ENCODE measurements at regions of chr21 and their contacts with region 1.

Region 1: DNA sequence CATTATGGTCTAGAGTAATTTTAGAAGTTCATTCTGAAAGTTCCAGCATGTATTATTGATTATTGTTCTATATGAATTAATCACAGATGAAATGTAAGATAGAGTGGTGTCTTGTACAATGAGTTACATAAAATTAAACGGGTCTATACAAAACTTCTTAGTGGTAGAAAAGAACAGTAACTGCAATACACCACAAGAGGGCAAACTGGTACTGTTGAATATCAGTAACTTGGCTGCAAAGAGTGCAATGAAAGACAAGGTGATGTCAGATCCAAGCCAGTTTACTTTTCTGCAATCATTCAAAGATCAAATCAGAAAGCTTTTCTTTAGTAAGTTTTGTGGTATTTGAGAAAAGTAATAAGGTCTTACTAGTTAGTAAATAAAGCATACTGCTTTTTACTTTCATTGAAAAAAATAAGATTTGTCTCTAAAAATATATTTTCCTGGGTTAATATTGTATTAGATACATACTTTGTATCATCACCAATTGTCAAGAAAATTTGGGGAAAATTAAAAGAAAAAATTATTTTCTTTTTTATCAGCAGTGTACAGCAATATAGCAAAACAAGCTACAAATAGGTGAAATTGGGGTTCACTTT is 66.4 kb upstream of the BTG3 start:
- DNase-seq: no peak
- H3K4me3 ChIP-seq: no peak overlapping the region
- H3K27ac ChIP-seq: no peak overlapping the region
- H3K27me3 ChIP-seq: no peaks in the 10 kb centered on the region
- CTCF ChIP-seq: peak; percentile 73 to 96 (median 90)

Region 2: GRCh38 chr21:16751695-16752474 is 927.2 kb before region 1 on chr21:
- intact Hi-C with region 1: no loop called
- DNase-seq: no peak
- H3K4me3 ChIP-seq: peak overlapping the region in 2 of 59 donors; percentile 6 to 15
- H3K27ac ChIP-seq: peak overlapping the region in 7 of 59 donors; percentile 6 to 59 (median 49)
- H3K27me3 ChIP-seq: no peaks in the 10 kb centered on the region
- CTCF ChIP-seq: no peak

Region 3: DNA sequence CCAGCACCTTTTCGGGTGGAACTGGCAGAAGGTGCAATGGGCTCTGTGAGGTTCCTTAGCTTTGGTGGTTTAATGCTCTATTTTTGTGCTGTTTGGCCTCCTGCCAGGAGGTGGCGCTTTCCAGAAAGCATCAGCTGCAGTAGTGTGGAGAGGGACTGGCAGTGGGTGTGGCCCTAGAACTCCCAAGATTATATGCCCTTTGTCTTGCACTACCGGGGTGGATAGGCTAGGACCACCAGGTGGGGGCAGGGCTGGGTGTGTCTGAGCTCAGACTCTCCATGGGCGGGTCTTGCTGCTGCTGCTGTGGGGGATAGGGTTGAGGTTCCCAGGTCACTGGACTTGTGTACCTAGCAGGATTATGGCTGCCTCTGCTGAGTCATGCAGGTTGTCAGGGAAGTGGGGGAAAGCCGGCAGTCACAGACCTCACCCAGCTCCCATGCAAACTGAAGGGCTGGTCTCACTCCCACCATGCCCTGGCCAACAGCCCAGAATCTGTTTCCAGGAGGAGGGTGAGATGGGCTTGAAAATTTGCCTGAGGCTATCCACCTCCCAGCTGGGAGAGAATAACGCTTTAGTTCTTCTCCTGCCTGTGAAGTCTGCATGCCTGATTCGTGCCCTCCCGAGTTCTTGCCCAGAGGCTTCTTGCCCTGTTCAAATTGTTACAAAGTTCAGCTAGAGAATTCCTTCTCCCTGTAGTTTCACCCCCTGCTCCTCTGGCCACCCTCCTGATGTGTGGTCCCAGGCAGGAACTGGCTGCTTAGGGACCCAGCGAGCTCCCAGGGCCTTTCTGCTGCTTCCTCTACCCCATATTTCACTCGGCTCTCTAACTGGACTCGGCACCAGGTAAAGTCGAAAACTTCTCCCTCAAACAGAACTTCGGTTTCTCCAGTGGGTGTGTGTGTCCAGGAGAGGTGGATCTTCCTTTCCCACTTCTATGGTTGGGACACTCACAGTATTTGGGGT is 10.1 kb after region 1 on chr21:
- intact Hi-C with region 1: no loop called
- DNase-seq: peak in 7 of 10 donors; percentile 15 to 51 (median 40)
- H3K4me3 ChIP-seq: peak overlapping the region in 4 of 59 donors; percentile 5 to 26 (median 15)
- H3K27ac ChIP-seq: peak overlapping the region in 11 of 59 donors; percentile 3 to 52 (median 23)
- H3K27me3 ChIP-seq: no peaks in the 10 kb centered on the region
- CTCF ChIP-seq: peak in 12 of 56 donors; percentile 6 to 32 (median 17)

Region 4: GRCh38 chr21:17726047-17726830 is 47.1 kb after region 1 on chr21:
- intact Hi-C with region 1: no loop called
- DNase-seq: no peak
- H3K4me3 ChIP-seq: no peak overlapping the region
- H3K27ac ChIP-seq: no peak overlapping the region
- H3K27me3 ChIP-seq: no peaks in the 10 kb centered on the region
- CTCF ChIP-seq: no peak

Region 5: GRCh38 chr21:17903029-17903806 is 224.1 kb after region 1 on chr21:
- intact Hi-C with region 1: loop called (anchors 1 to 2 kb)
- DNase-seq: no peak
- H3K4me3 ChIP-seq: peak overlapping the region in 4 of 59 donors; percentile 1 to 14 (median 5)
- H3K27ac ChIP-seq: peak overlapping the region in 48 of 59 donors; percentile 13 to 87 (median 67)
- H3K27me3 ChIP-seq: no peaks in the 10 kb centered on the region
- CTCF ChIP-seq: peak; percentile 27 to 79 (median 59)

Region 6: GRCh38 chr21:17921579-17922530 is 242.8 kb after region 1 on chr21:
- intact Hi-C with region 1: loop called in 1 of 2 experiments (anchors 1 kb)
- DNase-seq: no peak
- H3K4me3 ChIP-seq: no peak overlapping the region
- H3K27ac ChIP-seq: no peak overlapping the region
- H3K27me3 ChIP-seq: no peaks in the 10 kb centered on the region
- CTCF ChIP-seq: no peak

Region 7: DNA sequence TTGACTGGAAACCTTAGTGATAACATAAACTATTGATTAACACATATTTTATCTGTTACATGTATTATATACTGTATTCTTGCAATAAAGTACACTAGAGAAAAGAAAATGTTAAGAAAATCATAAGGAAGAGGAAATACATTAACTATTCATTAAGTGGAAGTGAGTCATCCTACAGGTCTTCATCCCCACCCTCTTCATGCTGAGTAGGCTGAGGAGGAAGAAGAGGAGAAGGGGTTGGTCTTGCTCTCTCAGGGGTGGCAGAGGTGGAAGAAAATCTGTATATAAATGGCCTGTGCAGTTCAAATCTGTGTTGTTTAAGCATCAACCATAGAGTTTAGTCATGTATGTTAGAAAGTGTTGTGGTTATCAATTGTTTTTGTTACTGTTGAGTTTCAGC is 499.4 kb after region 1 on chr21:
- intact Hi-C with region 1: no loop called
- DNase-seq: no peak
- H3K4me3 ChIP-seq: no peak overlapping the region
- H3K27ac ChIP-seq: no peak overlapping the region
- H3K27me3 ChIP-seq: no peaks in the 10 kb centered on the region
- CTCF ChIP-seq: no peak